Uterus (tissue), 4 donors: ENCODE measurements at regions of chr1 and their contacts with region 1.

Region 1: GRCh38 chr1:25616095-25616986 is at the start of gene MAN1C1:
- DNase-seq: peak; percentile 85 to 87
- H3K4me3 ChIP-seq: peak within 1 kb of the TSS; percentile 44 to 68
- H3K27ac ChIP-seq: peak within 1 kb of the TSS; percentile 79 to 94
- H3K4me1 ChIP-seq: peaks cover 0 to 15% of the 10 kb centered on the region in 2 donors
- H3K27me3 ChIP-seq: no peaks in the 10 kb centered on the region
- CTCF ChIP-seq: peak; percentile 29 to 63 (median 53)
- POLR2A ChIP-seq: peak in 1 of 2 donors; percentile 38
- total RNA-seq, gene MAN1C1: 5.0 to 31.1 (median 7.9) TPM

Region 2: GRCh38 chr1:25692560-25692959 is 76.2 kb after region 1 on chr1:
- intact Hi-C with region 1: loop called (anchors 5 kb)
- DNase-seq: no peak
- H3K4me3 ChIP-seq: no peak overlapping the region
- H3K27ac ChIP-seq: peak overlapping the region in 1 of 2 donors; percentile 90
- H3K4me1 ChIP-seq: peaks cover 9 to 13% of the 10 kb centered on the region in 2 donors
- H3K27me3 ChIP-seq: no peaks in the 10 kb centered on the region
- CTCF ChIP-seq: peak in 3 of 4 experiments; percentile 26 to 33 (median 26)
- POLR2A ChIP-seq: no peak

Region 3: DNA sequence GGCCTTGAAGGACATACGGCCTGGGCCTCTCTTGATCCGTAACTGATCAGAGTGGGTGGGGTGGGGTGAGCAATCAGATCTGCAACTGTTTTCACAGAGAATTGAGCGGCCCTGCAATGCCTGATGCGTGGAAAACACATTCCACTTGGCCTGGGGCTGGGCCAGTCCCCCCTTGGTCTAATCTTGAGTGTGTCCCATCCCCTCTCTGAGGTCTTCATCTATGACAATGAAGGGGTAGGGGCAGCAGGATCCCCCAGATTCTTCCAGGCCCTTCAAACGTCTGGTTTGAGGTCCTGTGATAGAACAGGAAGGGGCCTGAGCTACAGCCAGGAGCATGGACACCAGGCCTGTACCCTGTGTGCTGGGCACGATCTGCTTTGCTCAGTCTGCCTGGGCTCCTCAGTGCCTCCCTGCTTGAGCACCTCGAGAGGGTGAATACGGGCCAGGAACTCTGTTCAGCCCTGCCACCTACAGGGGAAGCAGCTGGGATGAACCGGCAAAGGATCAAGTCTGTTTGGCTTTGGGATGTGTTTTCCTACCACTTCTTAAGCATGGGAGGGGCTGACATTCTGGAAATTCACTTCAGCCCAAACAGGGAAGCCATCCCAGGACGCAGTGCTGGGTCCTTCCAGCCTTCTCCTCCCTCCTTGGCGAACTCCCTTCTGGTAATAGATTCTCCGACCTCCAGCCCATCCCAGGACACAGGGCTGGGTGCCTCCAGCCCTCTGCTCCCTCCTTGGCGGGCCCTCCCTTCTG is 127.7 kb after region 1 on chr1:
- intact Hi-C with region 1: loop called (anchors 10 kb)
- DNase-seq: peak; percentile 80 to 86
- H3K4me3 ChIP-seq: no peak overlapping the region
- H3K27ac ChIP-seq: peak overlapping the region; percentile 91 to 95
- H3K4me1 ChIP-seq: peaks cover 12 to 23% of the 10 kb centered on the region in 2 donors
- H3K27me3 ChIP-seq: no peaks in the 10 kb centered on the region
- CTCF ChIP-seq: peak; percentile 69 to 73 (median 70)
- POLR2A ChIP-seq: no peak